PC-3 (cell line): ENCODE measurements at regions of chr5 and their contacts with region 1.

Region 1: DNA sequence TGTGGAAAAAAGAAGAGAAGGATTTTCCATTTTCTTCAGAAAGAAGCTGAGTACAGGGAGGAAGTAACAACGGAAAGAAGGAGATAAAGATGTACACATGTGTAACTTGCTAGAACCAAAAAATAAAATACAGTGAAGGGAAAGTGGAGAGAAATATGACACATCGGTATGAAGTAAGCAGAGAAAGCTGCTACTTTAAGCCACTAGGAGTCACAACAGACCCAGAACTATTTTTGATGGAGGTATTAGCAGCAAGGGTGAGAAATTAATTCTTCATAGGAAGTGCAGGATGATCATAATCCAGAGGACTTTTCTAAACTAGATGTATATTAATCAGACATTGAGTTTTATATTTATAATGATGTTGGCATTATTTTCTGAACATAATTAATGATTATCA is 88.5 kb downstream of the FAM174A start:
- DNase-seq: peak; percentile 59
- ATAC-seq: peak; percentile 84
- H3K4me3 ChIP-seq: no peak overlapping the region
- H3K27ac ChIP-seq: no peak overlapping the region
- H3K4me1 ChIP-seq: no peaks in the 10 kb centered on the region
- H3K27me3 ChIP-seq: peaks cover 3% of the 10 kb centered on the region; the same call in 1 of the 2 replicates
- CTCF ChIP-seq: peak; percentile 84

Region 2: GRCh38 chr5:100479079-100479688 is 144.5 kb before region 1 on chr5:
- CTCF ChIA-PET with region 1: interaction called, 3 read pairs
- POLR2A ChIA-PET with region 1: no interaction called
- intact Hi-C with region 1: loop called (anchors 1 kb)
- DNase-seq: peak; percentile 68
- ATAC-seq: peak; percentile 89
- H3K4me3 ChIP-seq: no peak overlapping the region
- H3K27ac ChIP-seq: no peak overlapping the region
- H3K4me1 ChIP-seq: no peaks in the 10 kb centered on the region
- H3K27me3 ChIP-seq: no peaks in the 10 kb centered on the region
- CTCF ChIP-seq: peak; percentile 88

Region 3: DNA sequence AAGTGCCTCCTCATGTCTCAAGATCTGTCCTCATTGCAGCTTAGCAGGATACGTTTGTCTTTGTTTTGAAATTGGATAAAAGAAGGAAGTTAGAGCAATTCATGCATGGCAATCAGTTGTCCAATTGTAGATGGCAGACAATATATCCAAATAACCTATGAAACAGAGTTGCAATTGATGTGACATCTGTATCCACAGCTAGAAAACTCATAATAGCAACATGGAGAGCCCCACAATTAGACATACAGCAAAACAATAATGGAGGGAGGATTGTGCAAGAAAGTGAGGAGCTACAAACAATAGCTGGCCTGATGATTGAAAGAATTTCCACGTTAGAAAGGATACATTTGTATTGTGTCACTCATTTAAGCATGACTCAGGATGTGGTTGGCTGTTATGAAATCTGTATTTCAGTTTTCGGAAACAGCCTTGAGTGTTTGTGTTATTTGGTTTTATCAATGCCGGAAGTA is 43.5 kb after region 1 on chr5:
- CTCF ChIA-PET with region 1: no interaction called
- POLR2A ChIA-PET with region 1: no interaction called
- intact Hi-C with region 1: no loop called
- DNase-seq: peak; percentile 86
- ATAC-seq: peak; percentile 85
- H3K4me3 ChIP-seq: no peak overlapping the region
- H3K27ac ChIP-seq: no peak overlapping the region
- H3K4me1 ChIP-seq: peaks cover 19% of the 10 kb centered on the region
- H3K27me3 ChIP-seq: no peaks in the 10 kb centered on the region
- CTCF ChIP-seq: no peak

Region 4: GRCh38 chr5:100772548-100772947 is 148.8 kb after region 1 on chr5:
- CTCF ChIA-PET with region 1: no interaction called
- POLR2A ChIA-PET with region 1: no interaction called
- intact Hi-C with region 1: loop called (anchors 5 kb)
- DNase-seq: no peak
- ATAC-seq: no peak
- H3K4me3 ChIP-seq: no peak overlapping the region
- H3K27ac ChIP-seq: no peak overlapping the region
- H3K4me1 ChIP-seq: peaks cover 13% of the 10 kb centered on the region
- H3K27me3 ChIP-seq: no peaks in the 10 kb centered on the region
- CTCF ChIP-seq: no peak

Region 5: DNA sequence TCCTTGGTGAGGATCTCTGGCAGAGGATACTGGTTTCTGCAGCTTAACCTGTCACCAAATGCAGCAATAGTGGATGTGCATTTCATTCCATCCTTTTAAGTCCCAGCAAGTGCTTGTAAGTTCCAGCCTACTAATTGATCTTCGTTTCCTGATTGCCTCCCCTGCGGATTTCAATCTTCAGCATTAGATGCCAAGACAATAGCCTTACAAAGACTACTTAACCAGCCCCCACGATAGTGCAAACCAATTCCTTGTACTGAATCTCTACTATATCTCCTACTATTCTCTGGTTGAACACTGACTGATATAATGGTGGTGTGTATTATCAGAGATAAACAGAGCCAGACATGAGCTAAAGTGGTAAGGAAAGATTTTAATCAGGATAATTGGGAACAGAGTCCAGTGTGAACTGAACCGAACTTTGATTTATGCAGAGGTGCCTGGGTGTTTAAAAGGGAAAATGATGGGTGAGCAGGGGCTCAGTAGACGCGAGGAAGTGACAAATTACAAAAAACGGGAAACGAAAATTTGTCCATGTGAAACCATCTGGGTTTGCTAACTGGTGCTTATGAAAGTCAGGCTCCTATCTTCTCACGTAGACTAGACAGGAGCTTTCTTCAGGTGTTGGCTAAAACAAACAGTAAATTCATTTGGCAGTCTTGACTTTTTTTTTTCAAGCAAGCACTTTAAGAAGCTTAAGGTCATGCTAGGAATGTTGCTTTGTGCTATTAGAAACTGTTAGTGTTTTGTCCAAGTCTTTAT is 386.2 kb after region 1 on chr5:
- CTCF ChIA-PET with region 1: no interaction called
- POLR2A ChIA-PET with region 1: no interaction called
- intact Hi-C with region 1: loop called (anchors 10 kb)
- DNase-seq: no peak
- ATAC-seq: no peak; the same call in 1 of the 2 replicates
- H3K4me3 ChIP-seq: no peak overlapping the region
- H3K27ac ChIP-seq: no peak overlapping the region
- H3K4me1 ChIP-seq: no peaks in the 10 kb centered on the region
- H3K27me3 ChIP-seq: no peaks in the 10 kb centered on the region
- CTCF ChIP-seq: no peak

Region 6: DNA sequence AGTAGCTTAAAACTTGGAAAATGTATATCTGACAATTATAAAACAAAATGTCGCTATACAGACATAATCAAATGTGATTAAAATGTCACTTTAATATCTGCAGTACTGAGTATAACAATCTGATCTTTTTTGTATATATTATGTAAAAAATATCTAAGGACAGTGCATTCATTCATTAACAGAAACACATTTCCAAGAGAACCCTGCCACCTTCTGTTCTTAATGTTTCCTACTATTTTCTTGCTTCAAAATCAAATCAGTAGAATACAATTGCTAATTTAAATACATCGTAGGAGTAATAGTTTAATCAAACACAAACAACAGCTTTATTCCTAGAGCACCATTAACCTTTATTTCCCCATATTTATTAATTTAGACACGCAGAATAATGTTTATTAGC is 422.0 kb after region 1 on chr5:
- CTCF ChIA-PET with region 1: no interaction called
- POLR2A ChIA-PET with region 1: no interaction called
- intact Hi-C with region 1: loop called (anchors 1 kb)
- DNase-seq: peak; percentile 44
- ATAC-seq: peak; percentile 46
- H3K4me3 ChIP-seq: no peak overlapping the region
- H3K27ac ChIP-seq: no peak overlapping the region
- H3K4me1 ChIP-seq: no peaks in the 10 kb centered on the region
- H3K27me3 ChIP-seq: no peaks in the 10 kb centered on the region
- CTCF ChIP-seq: peak; percentile 54

Region 7: GRCh38 chr5:101390151-101390908 is 766.6 kb after region 1 on chr5:
- CTCF ChIA-PET with region 1: no interaction called
- POLR2A ChIA-PET with region 1: no interaction called
- intact Hi-C with region 1: loop called (anchors 5 kb)
- DNase-seq: peak; percentile 71
- ATAC-seq: peak; percentile 49
- H3K4me3 ChIP-seq: no peak overlapping the region
- H3K27ac ChIP-seq: no peak overlapping the region
- H3K4me1 ChIP-seq: no peaks in the 10 kb centered on the region
- H3K27me3 ChIP-seq: no peaks in the 10 kb centered on the region
- CTCF ChIP-seq: peak; percentile 82